GM10248 (cell line): ENCODE measurements at regions of chr4 and their contacts with region 1.

Region 1: GRCh38 chr4:15245006-15245530 is 182.8 kb upstream of the C1QTNF7 start:
- DNase-seq: no peak
- CTCF ChIP-seq: no peak

Region 2: DNA sequence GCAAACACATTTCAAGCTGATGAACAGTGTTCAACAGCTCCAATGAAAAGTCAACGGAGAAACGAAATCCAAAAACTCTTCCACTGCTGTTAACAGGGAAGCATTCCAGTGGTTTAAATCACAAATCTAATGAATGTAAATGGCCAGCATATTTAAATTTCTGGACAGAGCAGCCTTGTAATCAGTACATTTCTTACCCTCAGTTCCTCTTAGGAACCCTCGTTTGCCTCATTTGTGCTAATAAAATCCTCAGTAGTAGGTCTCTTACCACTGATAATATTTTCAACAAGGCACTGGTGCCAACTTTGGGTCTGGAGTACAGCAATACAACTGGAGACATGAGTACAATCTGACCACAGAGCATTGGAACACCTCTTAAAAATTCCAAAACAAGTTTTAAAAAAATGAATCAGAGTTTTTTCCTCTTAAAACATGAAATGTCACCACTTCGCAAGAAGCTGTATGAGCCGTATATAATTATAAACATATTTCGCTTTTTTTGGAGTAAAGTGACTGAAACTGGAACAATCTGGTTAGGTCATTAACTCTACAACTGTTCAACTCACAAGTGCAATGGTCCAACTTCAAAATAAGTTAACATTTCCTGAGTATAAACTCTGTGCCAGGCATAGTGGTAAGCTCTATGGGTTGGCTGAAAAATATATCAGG is 31.6 kb before region 1 on chr4:
- CTCF ChIA-PET with region 1: no interaction called
- POLR2A ChIA-PET with region 1: no interaction called
- DNase-seq: no peak
- CTCF ChIP-seq: no peak

Region 3: GRCh38 chr4:15231265-15232091 is 13.6 kb before region 1 on chr4:
- CTCF ChIA-PET with region 1: interaction called, 14 read pairs
- POLR2A ChIA-PET with region 1: no interaction called
- DNase-seq: peak; percentile 61
- CTCF ChIP-seq: peak; percentile 69